H1 (cell line): ENCODE measurements at regions of chr7 and their contacts with region 1.

Region 1: GRCh38 chr7:5494683-5495561 is 71.3 kb upstream of the TNRC18 start:
- DNase-seq: peak in 1 of 2 experiments; percentile 88
- H3K4me3 ChIP-seq: no peak overlapping the region
- H3K27ac ChIP-seq: no peak overlapping the region
- H3K4me1 ChIP-seq: peaks cover 0 to 20% (median 12%) of the 10 kb centered on the region in 4 experiments; a peak in 5 of 7 replicates
- H3K27me3 ChIP-seq: no peaks in the 10 kb centered on the region
- CTCF ChIP-seq: peak in 2 of 3 experiments; percentile 87 to 93; a peak in 3 of 4 replicates
- EP300 ChIP-seq: no peak
- POLR2A ChIP-seq: no peak
- RAD21 ChIP-seq: peak; percentile 94 to 95

Region 2: DNA sequence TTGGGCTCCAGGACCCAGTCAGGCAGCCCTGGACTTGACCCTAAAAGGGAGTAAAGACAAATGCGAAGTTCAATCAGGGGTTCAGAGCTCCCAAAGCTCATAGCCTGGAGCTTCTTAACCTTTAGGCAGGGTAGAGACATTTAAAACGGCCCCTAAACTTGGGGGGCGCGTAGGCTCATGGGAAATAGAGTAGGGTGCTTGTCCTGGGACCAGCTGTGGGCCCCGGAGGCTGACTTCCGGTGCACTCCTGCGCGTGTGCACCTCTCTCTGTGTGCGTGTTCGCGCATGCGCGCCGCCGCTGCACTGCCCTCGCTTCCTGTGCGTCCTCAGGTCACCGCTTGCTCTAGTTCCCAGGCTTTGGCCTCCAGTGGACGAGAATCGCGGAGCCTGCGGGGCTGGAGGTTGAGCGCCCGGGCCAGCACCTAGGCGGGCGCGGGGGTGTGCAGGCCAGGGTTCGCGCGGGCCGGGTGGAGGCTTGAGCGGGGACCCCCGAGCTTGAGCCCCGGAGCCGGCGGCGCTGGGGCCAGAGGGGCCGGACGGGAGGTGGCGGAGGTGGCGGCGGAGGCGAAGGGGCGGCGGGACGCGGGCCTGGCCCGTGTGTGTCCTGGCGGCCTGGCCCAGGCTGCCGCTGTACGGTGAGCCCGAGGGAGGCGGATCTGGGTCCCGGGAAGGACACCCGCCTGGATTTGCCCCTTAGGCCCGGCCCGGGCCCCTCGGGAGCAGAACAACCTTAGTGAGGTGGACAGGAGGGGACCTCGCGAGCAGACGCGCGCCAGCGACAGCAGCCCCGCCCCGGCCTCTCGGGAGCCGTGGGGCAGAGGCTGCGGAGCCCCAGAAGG is 449.1 kb before region 1 on chr7 and contains the start of gene RBAK:
- CTCF ChIA-PET with region 1: no interaction called
- POLR2A ChIA-PET with region 1: no interaction called
- DNase-seq: peak; percentile 93 to 97
- H3K4me3 ChIP-seq: peak within 1 kb of the TSS; percentile 66 to 88 (median 74)
- H3K27ac ChIP-seq: no peak within 1 kb of the TSS; the same call in 1 of the 2 replicates
- H3K4me1 ChIP-seq: no peaks in the 10 kb centered on the region
- H3K27me3 ChIP-seq: no peaks in the 10 kb centered on the region
- CTCF ChIP-seq: peak in 1 of 3 experiments; percentile 1; a peak in 1 of 4 replicates
- EP300 ChIP-seq: no peak
- POLR2A ChIP-seq: peak; percentile 41 to 80; a peak in 1 of 3 replicates
- RAD21 ChIP-seq: no peak
- total RNA-seq, gene RBAK: 16.1 and 18.2 TPM in 2 replicates

Region 3: GRCh38 chr7:5507013-5507412 is 12.1 kb after region 1 on chr7:
- CTCF ChIA-PET with region 1: interaction called, 24 read pairs
- POLR2A ChIA-PET with region 1: interaction called, 9 read pairs
- DNase-seq: no peak
- H3K4me3 ChIP-seq: no peak overlapping the region
- H3K27ac ChIP-seq: no peak overlapping the region
- H3K4me1 ChIP-seq: no peaks in the 10 kb centered on the region; a peak in 1 of 7 replicates
- H3K27me3 ChIP-seq: no peaks in the 10 kb centered on the region
- CTCF ChIP-seq: no peak
- EP300 ChIP-seq: no peak
- POLR2A ChIP-seq: no peak
- RAD21 ChIP-seq: no peak

Region 4: GRCh38 chr7:5526100-5526905 is 31.4 kb after region 1 on chr7:
- CTCF ChIA-PET with region 1: interaction called, 22 read pairs
- POLR2A ChIA-PET with region 1: no interaction called
- DNase-seq: peak in 1 of 2 experiments; percentile 76
- H3K4me3 ChIP-seq: peak overlapping the region in 1 of 4 experiments; percentile 90; a peak in 2 of 8 replicates
- H3K27ac ChIP-seq: peak overlapping the region; percentile 24; the same call in 1 of the 2 replicates
- H3K4me1 ChIP-seq: peaks cover 0 to 21% (median 12%) of the 10 kb centered on the region in 4 experiments; a peak in 6 of 7 replicates
- H3K27me3 ChIP-seq: no peaks in the 10 kb centered on the region
- CTCF ChIP-seq: peak in 1 of 3 experiments; percentile 8; a peak in 1 of 4 replicates
- EP300 ChIP-seq: no peak
- POLR2A ChIP-seq: peak in 1 of 2 experiments; percentile 72; a peak in 2 of 3 replicates
- RAD21 ChIP-seq: peak; percentile 17 to 26; a peak in 2 of 4 replicates

Region 5: GRCh38 chr7:5694912-5695726 is 200.2 kb after region 1 on chr7:
- CTCF ChIA-PET with region 1: interaction called, 17 read pairs
- POLR2A ChIA-PET with region 1: no interaction called
- DNase-seq: no peak
- H3K4me3 ChIP-seq: no peak overlapping the region
- H3K27ac ChIP-seq: no peak overlapping the region
- H3K4me1 ChIP-seq: no peaks in the 10 kb centered on the region
- H3K27me3 ChIP-seq: no peaks in the 10 kb centered on the region
- CTCF ChIP-seq: no peak
- EP300 ChIP-seq: no peak
- POLR2A ChIP-seq: no peak
- RAD21 ChIP-seq: no peak